Activated T-helper 1 cell treated with anti-CD3 and anti-CD28 coated beads, Interleukin-12 subunit alpha, Interleukin-12 subunit beta, Interleukin-2, Interleukin-4 antibody, amounts not matched to agents 30 ng/mL and 10 ng/mL and 1 ng/mL, durations not matched to agents 14 hours and 24 hours and 36 hours (primary cell): ENCODE measurements at regions of chr12 and their contacts with region 1.

Region 1: DNA sequence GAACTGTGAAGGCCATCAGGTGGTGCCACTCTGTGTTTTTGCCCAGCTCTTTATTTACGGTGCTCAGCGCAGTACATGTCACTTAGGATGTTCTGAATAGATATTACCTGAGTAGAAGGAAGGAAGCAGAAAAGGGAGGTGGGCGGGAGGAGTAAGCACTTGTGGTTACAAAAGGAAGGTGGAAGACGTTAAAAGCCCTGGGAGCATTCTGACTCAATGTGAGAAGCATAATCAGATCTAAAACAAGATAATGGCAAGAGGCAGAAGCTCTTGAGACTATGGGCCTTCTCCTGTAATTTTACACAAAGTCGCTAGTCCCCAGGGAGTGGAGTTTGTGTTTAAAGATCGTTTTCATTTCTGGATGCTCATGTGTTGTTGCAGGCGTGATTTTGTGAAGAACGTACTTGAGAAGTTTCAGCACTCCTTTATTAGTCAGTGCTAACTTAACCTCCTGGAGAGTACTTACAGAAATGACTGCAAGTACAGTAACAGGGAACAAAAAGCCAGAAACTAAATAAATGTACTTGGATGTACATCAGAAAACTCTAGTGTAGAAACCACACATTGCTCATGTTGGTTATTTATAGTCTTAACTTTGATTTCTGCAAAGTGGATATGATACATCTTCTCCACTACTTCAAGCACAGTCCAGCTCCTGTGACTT is 1523.5 kb downstream of the AACS start:
- DNase-seq: peak; percentile 4
- H3K4me3 Mint-ChIP-seq: peak overlapping the region; percentile 52
- H3K27ac Mint-ChIP-seq: peak overlapping the region; percentile 68
- H3K4me1 Mint-ChIP-seq: peaks cover 19% of the 10 kb centered on the region
- H3K27me3 Mint-ChIP-seq: no peaks in the 10 kb centered on the region

Region 2: DNA sequence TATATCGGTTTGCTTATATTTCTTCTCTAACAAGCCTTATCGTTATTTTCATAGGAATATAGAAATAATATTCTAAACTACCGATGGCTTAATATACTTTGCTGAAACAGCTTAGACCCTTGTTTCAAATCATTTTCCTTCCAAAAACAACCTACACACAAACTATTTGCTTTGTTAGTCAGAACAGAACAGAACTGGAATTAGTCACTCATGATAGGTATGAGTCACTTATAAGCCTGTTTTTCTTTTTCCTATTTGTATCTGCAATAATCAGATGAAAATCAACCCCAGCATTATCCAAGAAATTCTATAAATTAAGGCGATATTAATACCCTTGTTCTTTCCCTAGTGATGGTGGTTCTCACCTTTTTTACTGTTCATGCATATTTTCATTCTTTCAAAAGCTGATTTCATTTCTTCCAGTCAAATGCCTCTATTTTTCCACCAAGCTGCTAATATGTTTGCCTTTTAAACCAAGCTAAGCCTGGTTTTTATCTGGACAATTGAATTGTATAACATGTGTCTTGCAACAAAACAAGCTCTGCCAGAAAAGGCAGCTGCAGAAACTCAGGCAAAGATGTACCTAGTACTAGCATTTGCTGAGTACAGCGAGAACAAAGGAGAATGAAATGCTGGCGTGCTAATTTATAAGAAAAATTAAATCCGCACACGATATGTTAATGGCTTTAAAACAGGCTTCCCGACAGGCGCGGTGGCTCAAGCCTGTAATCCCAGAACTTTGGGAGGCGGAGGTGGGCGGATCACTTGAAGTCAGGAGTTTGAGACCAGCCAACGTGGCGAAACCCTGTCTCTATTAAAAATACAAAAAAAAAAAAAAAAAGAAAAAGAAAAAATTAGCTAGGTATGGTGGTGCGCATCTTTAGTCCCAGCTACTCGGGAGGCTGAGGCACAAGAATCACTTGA is 105.3 kb before region 1 on chr12:
- intact Hi-C with region 1: loop called (anchors 2 kb)
- DNase-seq: no peak
- H3K4me3 Mint-ChIP-seq: no peak overlapping the region
- H3K27ac Mint-ChIP-seq: no peak overlapping the region
- H3K4me1 Mint-ChIP-seq: no peaks in the 10 kb centered on the region
- H3K27me3 Mint-ChIP-seq: peaks cover 1% of the 10 kb centered on the region

Region 3: DNA sequence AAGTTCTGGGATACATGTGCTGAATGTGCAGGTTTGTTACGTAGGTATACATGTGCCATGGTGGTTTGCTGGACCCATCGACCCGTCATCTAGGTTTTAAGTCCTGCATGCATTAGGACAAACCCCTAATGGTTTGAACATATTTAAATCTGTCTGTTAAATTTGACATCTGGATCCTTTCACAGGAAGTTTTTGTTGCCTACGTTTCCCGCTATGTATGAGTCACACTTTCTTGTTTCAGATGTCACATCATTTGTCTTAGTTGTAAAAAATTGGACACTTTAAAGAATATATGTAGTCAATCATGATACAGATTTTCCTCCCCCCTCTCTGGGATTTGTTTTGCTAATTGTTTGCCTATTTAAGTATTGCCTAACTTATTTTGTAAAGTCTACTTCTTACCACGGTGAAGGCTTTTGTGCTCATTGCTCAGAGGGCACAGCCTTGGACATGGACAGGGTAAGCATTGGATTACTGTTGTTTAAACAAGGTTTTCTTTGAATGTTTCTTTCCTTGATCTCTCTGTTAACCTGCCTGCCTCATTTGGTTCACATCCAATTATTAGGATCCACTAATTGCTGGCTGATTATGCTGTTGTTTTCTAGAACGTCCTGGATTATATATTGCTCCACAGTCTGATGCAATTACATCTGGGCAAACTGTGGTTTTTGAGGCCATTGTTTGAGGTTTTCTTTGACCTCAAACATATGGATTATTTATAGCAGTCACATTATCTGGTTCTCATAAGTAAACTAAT is 82.1 kb before region 1 on chr12:
- intact Hi-C with region 1: loop called (anchors 1 kb)
- DNase-seq: no peak
- H3K4me3 Mint-ChIP-seq: no peak overlapping the region
- H3K27ac Mint-ChIP-seq: peak overlapping the region; percentile 40
- H3K4me1 Mint-ChIP-seq: peaks cover 13% of the 10 kb centered on the region
- H3K27me3 Mint-ChIP-seq: no peaks in the 10 kb centered on the region

Region 4: GRCh38 chr12:126572170-126572569 is 16.5 kb before region 1 on chr12:
- intact Hi-C with region 1: loop called (anchors 2 kb)
- DNase-seq: no peak
- H3K4me3 Mint-ChIP-seq: no peak overlapping the region
- H3K27ac Mint-ChIP-seq: no peak overlapping the region
- H3K4me1 Mint-ChIP-seq: no peaks in the 10 kb centered on the region
- H3K27me3 Mint-ChIP-seq: no peaks in the 10 kb centered on the region

Region 5: GRCh38 chr12:126772171-126772864 is 183.6 kb after region 1 on chr12:
- intact Hi-C with region 1: loop called (anchors 1 kb)
- DNase-seq: peak; percentile 20
- H3K4me3 Mint-ChIP-seq: peak overlapping the region; percentile 85
- H3K27ac Mint-ChIP-seq: peak overlapping the region; percentile 97
- H3K4me1 Mint-ChIP-seq: peaks cover 15% of the 10 kb centered on the region
- H3K27me3 Mint-ChIP-seq: no peaks in the 10 kb centered on the region